ENCODE measurements at regions of chr1 and their contacts with region 1.

Region 1: GRCh38 chr1:145845514-145846161 is at the start of gene NUDT17:
- DNase-seq: peak; percentile 89
- ATAC-seq: peak; percentile 75
- H3K4me3 Mint-ChIP-seq: no peak within 1 kb of the TSS
- H3K27ac Mint-ChIP-seq: no peak within 1 kb of the TSS
- H3K4me1 Mint-ChIP-seq: peaks cover 7% of the 10 kb centered on the region
- H3K27me3 Mint-ChIP-seq: no peaks in the 10 kb centered on the region
- total RNA-seq, gene NUDT17: 3.7 to 4.0 TPM

Region 2: GRCh38 chr1:145765574-145765973 is 80.1 kb before region 1 on chr1:
- CTCF ChIA-PET with region 1: no interaction called
- POLR2A ChIA-PET with region 1: no interaction called
- intact Hi-C with region 1: no loop called
- DNase-seq: no peak
- ATAC-seq: no peak
- H3K4me3 Mint-ChIP-seq: no peak overlapping the region
- H3K27ac Mint-ChIP-seq: no peak overlapping the region
- H3K4me1 Mint-ChIP-seq: no peaks in the 10 kb centered on the region
- H3K27me3 Mint-ChIP-seq: no peaks in the 10 kb centered on the region

Region 3: DNA sequence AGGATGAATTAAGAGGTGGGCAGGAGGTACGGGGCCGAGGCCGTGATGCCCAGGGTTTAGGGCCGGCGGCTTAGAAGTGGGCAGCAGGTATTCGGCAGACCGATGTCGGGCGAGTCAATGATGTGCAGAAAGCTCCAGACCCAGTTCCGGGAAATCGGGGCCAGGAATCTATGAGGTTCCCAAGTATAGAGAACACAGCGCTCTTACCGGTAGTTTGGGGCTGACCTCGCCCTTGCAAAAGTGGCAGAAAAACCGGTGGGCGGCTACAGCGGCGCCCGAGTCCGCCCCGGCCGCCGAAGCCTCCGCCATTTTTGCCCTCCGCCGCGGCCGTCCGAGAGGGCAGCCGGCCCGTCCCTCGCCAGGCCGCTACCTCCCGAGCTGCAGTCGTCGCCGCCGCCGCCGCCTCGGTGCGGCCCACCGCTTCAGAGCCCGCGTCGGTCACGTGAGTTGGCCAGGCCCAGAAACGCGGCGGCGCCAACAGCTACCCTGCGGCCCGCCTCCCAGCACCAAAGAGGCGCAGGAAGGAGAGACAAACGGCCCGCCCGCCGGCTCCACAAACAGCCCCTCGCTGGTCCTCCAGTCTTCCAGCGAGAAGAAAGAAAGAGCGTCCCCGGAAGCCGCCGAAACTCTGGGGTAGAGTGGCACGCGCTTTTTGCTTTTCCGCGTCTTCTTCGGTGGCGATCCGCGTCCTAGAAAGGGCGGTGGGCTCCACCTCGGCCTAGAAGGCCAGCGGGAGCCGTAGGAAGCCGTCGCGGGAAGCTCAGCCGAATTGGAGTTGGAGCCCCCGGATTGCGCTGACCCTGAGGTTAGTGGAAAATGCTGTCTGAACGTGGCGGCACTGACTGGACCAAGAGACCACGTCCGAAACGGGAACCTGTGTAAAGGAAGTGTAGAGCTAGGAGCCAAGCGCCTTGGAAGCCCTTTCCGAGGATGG is 21.8 kb before region 1 on chr1 and contains the starts of genes POLR3C and RNF115:
- CTCF ChIA-PET with region 1: interaction called, 98 read pairs
- POLR2A ChIA-PET with region 1: interaction called, 5 read pairs
- intact Hi-C with region 1: loop called in 1 of 2 experiments (anchors 2 kb)
- DNase-seq: peak; percentile 91
- ATAC-seq: peak; percentile 67
- H3K4me3 Mint-ChIP-seq: peak within 1 kb of the TSS; percentile 97
- H3K27ac Mint-ChIP-seq: peak within 1 kb of the TSS; percentile 98
- H3K4me1 Mint-ChIP-seq: peaks cover 44% of the 10 kb centered on the region
- H3K27me3 Mint-ChIP-seq: no peaks in the 10 kb centered on the region
- total RNA-seq, gene POLR3C: 34.2 to 42.6 TPM
- total RNA-seq, gene RNF115: 11.8 to 13.9 TPM

Region 4: DNA sequence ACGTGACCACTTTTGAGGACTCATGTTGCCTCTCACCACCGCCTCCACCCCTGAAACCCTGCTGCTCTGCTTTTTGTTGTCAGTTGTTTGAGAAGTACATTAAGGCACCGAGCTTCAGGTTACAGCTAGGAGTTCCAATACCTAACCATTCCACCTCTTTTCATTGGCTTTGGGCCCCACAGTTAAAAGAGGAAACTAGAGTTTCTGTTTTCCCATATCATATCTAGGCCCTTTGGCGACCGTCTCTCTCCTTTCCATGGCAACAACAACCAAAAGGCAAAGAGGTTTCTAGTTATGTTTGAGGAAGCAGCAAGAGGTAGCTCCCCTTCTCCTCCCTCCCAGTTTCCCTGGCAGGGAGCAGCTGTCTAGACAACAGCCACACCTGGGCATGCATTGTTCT is 34.1 kb after region 1 on chr1:
- CTCF ChIA-PET with region 1: interaction called, 30 read pairs
- POLR2A ChIA-PET with region 1: no interaction called
- intact Hi-C with region 1: no loop called
- DNase-seq: no peak
- ATAC-seq: no peak
- H3K4me3 Mint-ChIP-seq: no peak overlapping the region
- H3K27ac Mint-ChIP-seq: no peak overlapping the region
- H3K4me1 Mint-ChIP-seq: peaks cover 4% of the 10 kb centered on the region
- H3K27me3 Mint-ChIP-seq: peaks cover 14% of the 10 kb centered on the region

Region 5: DNA sequence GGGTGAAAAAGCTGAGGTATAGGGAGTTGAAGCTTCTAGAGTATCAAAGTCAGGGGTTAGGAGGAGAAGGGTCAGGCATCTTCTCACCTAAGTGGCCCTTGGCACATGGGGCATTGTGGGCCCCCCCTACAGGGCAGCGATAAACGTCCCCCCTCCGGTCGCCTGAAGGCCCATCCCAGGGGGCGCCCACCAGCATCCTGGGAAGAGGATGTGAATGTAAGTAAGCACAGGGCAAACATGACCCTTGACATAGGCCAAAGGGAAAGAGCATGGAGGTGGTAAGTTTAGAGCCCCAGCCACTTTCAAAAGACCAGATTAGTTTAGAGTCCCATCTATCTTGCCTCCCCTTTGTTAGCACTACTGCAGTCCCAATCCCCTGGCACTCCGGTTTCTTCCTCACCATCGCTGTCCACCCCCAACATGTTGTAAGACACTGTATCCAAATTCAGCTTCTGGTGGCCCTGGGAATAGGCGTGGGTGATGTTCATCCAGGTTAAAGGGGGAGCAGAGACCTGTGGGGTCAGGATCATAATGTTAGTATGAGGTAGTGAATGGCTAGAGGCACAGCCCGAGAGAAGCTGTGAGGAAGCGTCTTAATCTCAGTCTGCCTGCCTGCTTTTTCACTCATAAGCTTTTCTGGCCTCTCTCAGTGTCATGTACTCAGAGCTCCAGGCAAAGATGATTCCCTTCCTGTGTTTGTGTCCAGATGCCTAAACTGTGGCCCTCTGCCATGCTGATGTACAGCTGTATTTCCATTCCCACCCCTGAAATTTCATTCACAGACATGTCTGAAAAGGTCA is 61.5 kb after region 1 on chr1:
- CTCF ChIA-PET with region 1: interaction called, 44 read pairs
- POLR2A ChIA-PET with region 1: interaction called, 5 read pairs
- intact Hi-C with region 1: loop called (anchors 1 to 5 kb)
- DNase-seq: no peak
- ATAC-seq: no peak
- H3K4me3 Mint-ChIP-seq: no peak overlapping the region
- H3K27ac Mint-ChIP-seq: no peak overlapping the region
- H3K4me1 Mint-ChIP-seq: no peaks in the 10 kb centered on the region
- H3K27me3 Mint-ChIP-seq: no peaks in the 10 kb centered on the region

Region 6: GRCh38 chr1:145957443-145958319 is 112.0 kb after region 1 on chr1 and contains the start of gene LIX1L:
- CTCF ChIA-PET with region 1: interaction called, 10 read pairs
- POLR2A ChIA-PET with region 1: interaction called, 3 read pairs
- intact Hi-C with region 1: no loop called
- DNase-seq: peak; percentile 98
- ATAC-seq: peak; percentile 89
- H3K4me3 Mint-ChIP-seq: peak within 1 kb of the TSS; percentile 87
- H3K27ac Mint-ChIP-seq: peak within 1 kb of the TSS; percentile 93
- H3K4me1 Mint-ChIP-seq: peaks cover 59% of the 10 kb centered on the region
- H3K27me3 Mint-ChIP-seq: no peaks in the 10 kb centered on the region
- total RNA-seq, gene LIX1L: 44.9 to 49.4 TPM

Region 7: DNA sequence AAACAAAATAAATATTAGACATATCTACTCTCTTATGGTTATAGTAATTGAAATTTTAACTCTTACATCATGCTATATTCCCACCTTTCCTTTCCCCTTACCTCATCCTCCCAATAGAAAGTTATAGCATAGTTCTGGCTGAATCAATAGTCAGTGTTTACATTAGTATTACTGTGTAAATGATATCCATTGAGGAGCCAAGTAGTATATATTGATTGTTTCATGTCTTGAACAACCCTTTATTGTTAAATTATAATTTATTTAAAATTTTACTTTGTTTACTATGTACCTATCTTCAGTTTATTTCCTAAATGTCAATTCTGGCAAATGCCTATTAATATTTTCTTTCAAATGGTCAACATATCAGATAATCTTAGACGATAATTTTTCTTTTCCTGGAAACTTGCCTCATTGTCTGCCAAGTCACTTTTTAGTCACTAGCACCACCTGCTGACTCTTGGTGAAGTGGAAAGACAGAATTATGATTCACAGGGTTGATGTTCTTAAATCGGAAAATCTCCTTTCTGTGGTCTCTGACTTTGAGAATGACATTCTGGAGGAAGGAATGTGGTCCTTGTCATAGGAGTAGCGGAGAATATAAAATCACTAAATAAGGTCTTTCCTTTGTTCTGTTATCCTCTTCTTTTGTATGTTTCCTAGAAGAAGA is 167.2 kb after region 1 on chr1:
- CTCF ChIA-PET with region 1: interaction called, 14 read pairs
- POLR2A ChIA-PET with region 1: interaction called, 3 read pairs
- intact Hi-C with region 1: loop called (anchors 1 kb)
- DNase-seq: peak; percentile 71
- ATAC-seq: peak; percentile 81
- H3K4me3 Mint-ChIP-seq: no peak overlapping the region
- H3K27ac Mint-ChIP-seq: peak overlapping the region; percentile 21
- H3K4me1 Mint-ChIP-seq: peaks cover 7% of the 10 kb centered on the region
- H3K27me3 Mint-ChIP-seq: peaks cover 5% of the 10 kb centered on the region

Measured in activated CD4-positive, alpha-beta T cell treated with anti-CD3 and anti-CD28 coated beads for 36 hours (primary cell).